ENCODE measurements at regions of chr1 and their contacts with region 1.

Region 1: DNA sequence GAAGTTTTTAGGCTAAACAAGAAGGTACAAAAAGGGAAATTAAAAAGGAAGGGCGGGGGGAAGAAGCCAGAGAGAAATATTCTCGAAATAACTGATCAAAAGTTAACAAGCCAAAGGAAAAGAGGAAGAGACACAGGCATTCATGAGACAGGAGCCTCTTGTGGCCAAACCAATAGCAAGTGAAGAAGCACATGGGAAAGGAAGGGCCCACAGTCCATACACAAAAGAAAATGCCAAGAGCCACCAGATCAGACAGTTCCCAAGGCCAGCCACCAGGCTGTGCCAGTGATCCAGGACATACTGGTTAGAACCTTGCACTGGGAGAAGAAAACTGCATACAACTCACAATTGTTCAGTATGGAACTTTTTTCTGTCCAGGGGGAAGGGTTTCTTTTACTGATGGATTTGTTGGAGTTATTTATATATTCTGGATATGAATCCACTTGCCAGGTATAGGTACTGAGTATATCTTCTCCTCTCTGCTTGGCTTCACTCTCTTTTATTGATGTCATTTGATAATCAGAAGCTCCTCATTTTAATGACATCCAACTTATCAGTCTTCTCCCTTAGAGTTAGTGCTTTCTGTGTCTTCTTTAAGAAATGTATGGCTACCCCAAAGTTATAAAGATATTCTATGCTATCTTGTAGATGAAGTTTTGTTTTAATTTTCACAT is 76.8 kb downstream of the CD46 start:
- DNase-seq: peak; percentile 32 to 75 (median 48)
- ATAC-seq: peak in 1 of 2 donors; percentile 7
- H3K4me3 Mint-ChIP-seq: peak overlapping the region in 3 of 10 donors; percentile 11 to 25 (median 22)
- H3K27ac Mint-ChIP-seq: peak overlapping the region; percentile 66 to 100 (median 90)
- H3K4me1 Mint-ChIP-seq: peaks cover 55 to 99% (median 95%) of the 10 kb centered on the region in 4 donors
- H3K27me3 Mint-ChIP-seq: peaks cover 0 to 6% (median 2%) of the 10 kb centered on the region in 5 donors

Region 2: GRCh38 chr1:207444514-207445217 is 384.0 kb before region 1 on chr1:
- POLR2A ChIA-PET with region 1: no interaction called
- DNase-seq: no peak
- ATAC-seq: no peak
- H3K4me3 Mint-ChIP-seq: no peak overlapping the region
- H3K27ac Mint-ChIP-seq: no peak overlapping the region
- H3K4me1 Mint-ChIP-seq: no peaks in the 10 kb centered on the region
- H3K27me3 Mint-ChIP-seq: peaks cover 0 to under 1% (median 0%) of the 10 kb centered on the region in 5 donors

Region 3: GRCh38 chr1:207787776-207788175 is 40.8 kb before region 1 on chr1:
- POLR2A ChIA-PET with region 1: interaction called, 10 read pairs
- DNase-seq: no peak
- ATAC-seq: no peak
- H3K4me3 Mint-ChIP-seq: no peak overlapping the region
- H3K27ac Mint-ChIP-seq: peak overlapping the region in 1 of 10 donors; percentile 40
- H3K4me1 Mint-ChIP-seq: no peaks in the 10 kb centered on the region
- H3K27me3 Mint-ChIP-seq: no peaks in the 10 kb centered on the region

Region 4: DNA sequence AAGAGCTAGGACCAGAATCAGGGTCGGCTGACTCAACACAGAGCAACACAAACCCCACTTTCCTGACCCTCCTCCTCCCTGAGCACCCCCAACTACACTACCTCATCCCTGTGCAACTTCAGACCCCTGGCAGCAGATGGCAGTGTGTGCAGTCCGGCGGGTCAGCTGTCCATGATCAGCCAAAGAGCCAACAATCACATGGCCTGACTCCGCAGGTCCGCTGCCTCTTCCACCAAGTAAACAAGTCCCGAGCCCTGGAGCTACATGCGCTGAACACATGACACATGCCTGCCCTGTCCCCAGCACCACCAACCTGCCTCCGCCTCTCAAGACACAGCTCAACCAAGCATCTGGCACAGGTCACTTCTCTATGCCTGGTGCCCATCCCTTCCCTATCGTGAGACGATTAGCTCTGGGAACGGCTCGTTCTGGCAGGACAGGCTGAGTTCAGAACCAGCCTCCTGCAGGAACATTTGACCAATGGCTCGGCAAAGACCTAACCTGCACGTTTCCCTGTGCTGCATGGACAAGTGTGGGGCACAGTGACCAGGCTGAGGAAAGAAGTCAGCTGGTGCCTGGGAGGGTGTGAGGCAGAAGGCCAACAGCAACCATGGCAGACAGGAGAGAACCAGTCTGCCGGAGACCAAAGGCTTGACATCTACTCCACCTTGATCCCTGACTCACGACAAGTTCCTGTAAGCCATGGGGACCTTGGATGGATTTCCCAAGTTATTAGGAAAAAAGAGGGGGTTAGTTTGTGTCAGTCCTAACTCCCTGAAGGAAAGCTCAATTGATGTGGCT is 16.5 kb before region 1 on chr1:
- POLR2A ChIA-PET with region 1: interaction called, 10 read pairs
- DNase-seq: no peak
- ATAC-seq: no peak
- H3K4me3 Mint-ChIP-seq: peak overlapping the region in 3 of 10 donors; percentile 10 to 30 (median 18)
- H3K27ac Mint-ChIP-seq: peak overlapping the region; percentile 19 to 89 (median 70)
- H3K4me1 Mint-ChIP-seq: peaks cover 42 to 95% (median 91%) of the 10 kb centered on the region in 4 donors
- H3K27me3 Mint-ChIP-seq: no peaks in the 10 kb centered on the region

Region 5: GRCh38 chr1:207885129-207886032 is 56.8 kb after region 1 on chr1:
- POLR2A ChIA-PET with region 1: interaction called, 36 read pairs
- DNase-seq: peak; percentile 47 to 82 (median 68)
- ATAC-seq: peak; percentile 74 to 76
- H3K4me3 Mint-ChIP-seq: peak overlapping the region in 7 of 10 donors; percentile 33 to 91 (median 52)
- H3K27ac Mint-ChIP-seq: peak overlapping the region; percentile 76 to 99 (median 96)
- H3K4me1 Mint-ChIP-seq: peaks cover 29 to 43% (median 41%) of the 10 kb centered on the region in 4 donors
- H3K27me3 Mint-ChIP-seq: peaks cover 0 to 11% (median 2%) of the 10 kb centered on the region in 5 donors

Region 6: DNA sequence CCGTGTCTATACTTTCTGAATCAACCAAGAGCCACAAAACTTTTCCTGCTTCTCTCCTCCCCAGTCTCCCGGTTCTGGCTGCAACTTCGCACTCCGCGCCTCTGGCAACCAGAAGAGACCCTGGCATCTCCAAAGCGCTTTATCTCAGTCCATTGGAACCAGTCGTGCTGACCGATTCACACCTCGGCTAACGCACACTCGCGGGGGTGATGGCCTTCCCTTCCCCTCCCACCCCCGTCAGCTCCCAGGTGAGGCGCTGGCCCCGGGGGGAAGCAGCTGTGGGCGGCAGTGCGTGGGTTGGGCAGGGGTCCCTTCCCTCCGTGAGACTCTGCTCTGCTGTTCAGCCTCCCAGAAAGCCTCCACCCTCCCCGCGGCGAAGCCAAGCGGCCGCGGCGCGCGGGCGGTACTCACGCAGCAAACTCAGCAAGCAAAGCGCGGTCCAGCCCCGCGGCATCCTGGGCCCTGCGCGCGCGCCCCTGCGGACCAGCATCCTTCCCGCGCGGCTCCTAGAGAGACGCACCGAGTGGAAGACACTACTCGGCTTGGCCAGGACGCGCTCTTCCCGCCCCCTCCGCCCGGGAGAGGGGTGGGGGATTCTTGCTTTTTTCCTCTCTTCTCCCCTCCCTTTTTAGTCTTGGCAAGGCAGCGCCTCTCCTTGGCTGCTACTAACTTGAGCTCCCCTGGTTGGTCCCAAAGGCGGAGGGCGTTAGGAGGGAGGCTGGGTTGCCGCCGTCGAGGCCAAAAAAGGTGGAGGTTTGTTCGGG is 82.2 kb after region 1 on chr1 and contains the start of gene CD34:
- POLR2A ChIA-PET with region 1: no interaction called
- DNase-seq: peak in 1 of 10 donors; percentile 8
- ATAC-seq: peak; percentile 57 to 67
- H3K4me3 Mint-ChIP-seq: peak within 1 kb of the TSS; percentile 29 to 74 (median 63)
- H3K27ac Mint-ChIP-seq: no peak within 1 kb of the TSS
- H3K4me1 Mint-ChIP-seq: peaks cover 2 to 23% (median 19%) of the 10 kb centered on the region in 4 donors
- H3K27me3 Mint-ChIP-seq: peaks cover 34 to 83% (median 49%) of the 10 kb centered on the region in 5 donors
- polyA plus RNA-seq, gene CD34: not detected

Region 7: DNA sequence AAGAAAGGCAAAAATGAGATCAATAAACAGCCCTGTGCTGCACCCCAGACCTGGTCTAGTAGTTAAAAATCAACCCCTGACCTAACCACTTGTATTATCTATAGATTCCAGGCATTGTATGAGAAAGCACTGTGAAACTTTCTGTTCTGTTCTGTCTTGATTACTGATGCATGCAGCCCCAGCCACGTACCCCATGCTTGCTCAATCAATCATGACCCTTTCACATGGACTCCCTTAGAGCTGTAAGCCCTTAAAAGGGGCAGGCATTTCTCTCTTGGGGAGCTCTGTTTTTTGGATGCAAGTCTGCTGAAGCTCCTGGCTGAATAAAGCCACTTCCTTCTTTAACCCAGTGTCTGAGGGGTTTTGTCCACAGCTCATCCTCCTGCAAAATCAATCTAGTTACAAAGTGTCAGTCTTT is 106.6 kb after region 1 on chr1:
- POLR2A ChIA-PET with region 1: no interaction called
- DNase-seq: no peak
- ATAC-seq: no peak
- H3K4me3 Mint-ChIP-seq: no peak overlapping the region
- H3K27ac Mint-ChIP-seq: no peak overlapping the region
- H3K4me1 Mint-ChIP-seq: no peaks in the 10 kb centered on the region
- H3K27me3 Mint-ChIP-seq: peaks cover 4 to 29% (median 10%) of the 10 kb centered on the region in 5 donors

Measured in naive thymus-derived CD8-positive, alpha-beta T cell (primary cell).